ENCODE measurements at regions of chr1 and their contacts with region 1.

Region 1: DNA sequence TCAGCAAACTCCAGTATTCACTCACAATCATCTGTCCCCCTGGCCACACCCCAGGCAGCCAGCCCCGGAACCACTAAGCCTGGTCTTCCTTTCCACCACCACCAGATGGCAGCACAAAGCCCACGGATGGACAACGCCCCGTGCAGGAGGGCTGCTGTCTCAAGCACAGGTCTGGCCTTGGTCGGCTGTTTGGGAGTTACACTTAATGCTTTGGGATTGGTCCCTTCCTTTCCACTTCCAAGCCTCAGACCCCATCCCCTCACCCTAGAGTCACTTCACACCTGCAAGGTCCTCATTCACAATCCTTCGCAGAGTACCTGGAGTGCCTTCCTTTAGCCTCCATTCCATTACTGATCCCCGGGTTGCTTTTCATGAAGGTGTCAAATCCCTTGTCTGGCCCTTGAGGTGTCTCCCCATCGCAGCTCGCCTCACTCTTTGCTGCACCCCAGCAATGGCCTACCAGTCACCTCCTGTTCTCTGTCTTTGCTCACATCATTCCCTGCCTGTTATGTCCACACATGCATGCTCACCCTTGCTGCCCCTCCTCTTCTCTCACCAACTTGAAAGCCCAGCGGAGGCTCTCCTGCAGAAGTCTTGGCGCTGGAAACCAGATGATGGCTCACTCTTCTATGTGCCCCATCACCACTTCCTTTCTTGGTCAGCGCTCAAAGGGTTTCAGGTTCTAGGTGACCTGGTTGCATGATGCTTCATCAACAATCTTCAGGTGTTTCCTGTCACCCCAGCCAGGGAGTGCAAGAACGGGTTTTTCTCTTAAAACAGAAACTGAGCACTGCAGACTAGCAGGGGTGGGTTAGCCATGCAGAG is 24.9 kb upstream of the KCNA2 start:
- DNase-seq: peak; percentile 81
- H3K4me3 Mint-ChIP-seq: no peak overlapping the region
- H3K27ac Mint-ChIP-seq: no peak overlapping the region
- H3K4me1 Mint-ChIP-seq: peaks cover 58% of the 10 kb centered on the region
- H3K27me3 Mint-ChIP-seq: no peaks in the 10 kb centered on the region

Region 2: GRCh38 chr1:110455151-110455550 is 175.9 kb before region 1 on chr1:
- intact Hi-C with region 1: no loop called
- DNase-seq: no peak
- H3K4me3 Mint-ChIP-seq: no peak overlapping the region
- H3K27ac Mint-ChIP-seq: no peak overlapping the region
- H3K4me1 Mint-ChIP-seq: no peaks in the 10 kb centered on the region
- H3K27me3 Mint-ChIP-seq: peaks cover 8% of the 10 kb centered on the region

Region 3: GRCh38 chr1:110605901-110606656 is 25.0 kb before region 1 on chr1 and contains the start of gene KCNA2:
- intact Hi-C with region 1: no loop called
- DNase-seq: no peak
- H3K4me3 Mint-ChIP-seq: peak within 1 kb of the TSS; percentile 71
- H3K27ac Mint-ChIP-seq: no peak within 1 kb of the TSS
- H3K4me1 Mint-ChIP-seq: peaks cover 8% of the 10 kb centered on the region
- H3K27me3 Mint-ChIP-seq: peaks cover 55% of the 10 kb centered on the region
- total RNA-seq, gene KCNA2: 0.16 and 0.21 TPM in 2 replicates

Region 4: GRCh38 chr1:110619412-110620249 is 11.4 kb before region 1 on chr1:
- intact Hi-C with region 1: loop called (anchors 1 kb)
- DNase-seq: peak; percentile 83
- H3K4me3 Mint-ChIP-seq: peak overlapping the region; percentile 78
- H3K27ac Mint-ChIP-seq: peak overlapping the region; percentile 53
- H3K4me1 Mint-ChIP-seq: peaks cover 32% of the 10 kb centered on the region
- H3K27me3 Mint-ChIP-seq: peaks cover 18% of the 10 kb centered on the region

Region 5: DNA sequence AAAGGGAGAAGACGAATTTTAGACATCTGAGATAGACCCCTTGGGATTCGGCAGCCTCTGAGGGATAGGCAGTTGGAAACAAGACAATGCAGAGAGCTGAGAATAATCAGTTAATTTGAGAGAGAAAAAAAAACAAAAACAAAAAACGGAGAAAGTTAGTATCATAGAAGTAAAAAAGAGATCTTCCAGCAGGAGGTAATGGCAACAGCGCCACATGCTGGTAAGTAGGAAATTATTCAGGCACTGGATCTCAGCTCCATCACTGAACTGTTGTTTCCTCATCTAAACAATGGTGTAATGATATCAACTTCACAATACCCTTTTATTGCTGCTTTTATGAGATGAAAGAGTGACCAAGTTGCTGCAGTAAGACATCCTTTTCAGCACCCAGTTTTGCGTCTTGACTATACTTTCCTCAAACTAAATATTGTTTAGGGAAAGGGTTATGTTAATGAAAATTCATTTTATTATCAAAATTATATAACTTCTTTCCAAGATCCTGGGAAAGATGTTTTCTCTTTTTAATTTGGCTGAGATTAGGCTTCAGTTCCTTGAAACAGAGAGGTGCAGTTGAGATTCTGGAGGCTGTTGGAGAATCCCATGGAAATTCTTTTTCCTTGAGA is 135.1 kb after region 1 on chr1:
- intact Hi-C with region 1: loop called (anchors 1 kb)
- DNase-seq: peak; percentile 31
- H3K4me3 Mint-ChIP-seq: no peak overlapping the region
- H3K27ac Mint-ChIP-seq: no peak overlapping the region
- H3K4me1 Mint-ChIP-seq: peaks cover 6% of the 10 kb centered on the region
- H3K27me3 Mint-ChIP-seq: peaks cover 57% of the 10 kb centered on the region

Region 6: DNA sequence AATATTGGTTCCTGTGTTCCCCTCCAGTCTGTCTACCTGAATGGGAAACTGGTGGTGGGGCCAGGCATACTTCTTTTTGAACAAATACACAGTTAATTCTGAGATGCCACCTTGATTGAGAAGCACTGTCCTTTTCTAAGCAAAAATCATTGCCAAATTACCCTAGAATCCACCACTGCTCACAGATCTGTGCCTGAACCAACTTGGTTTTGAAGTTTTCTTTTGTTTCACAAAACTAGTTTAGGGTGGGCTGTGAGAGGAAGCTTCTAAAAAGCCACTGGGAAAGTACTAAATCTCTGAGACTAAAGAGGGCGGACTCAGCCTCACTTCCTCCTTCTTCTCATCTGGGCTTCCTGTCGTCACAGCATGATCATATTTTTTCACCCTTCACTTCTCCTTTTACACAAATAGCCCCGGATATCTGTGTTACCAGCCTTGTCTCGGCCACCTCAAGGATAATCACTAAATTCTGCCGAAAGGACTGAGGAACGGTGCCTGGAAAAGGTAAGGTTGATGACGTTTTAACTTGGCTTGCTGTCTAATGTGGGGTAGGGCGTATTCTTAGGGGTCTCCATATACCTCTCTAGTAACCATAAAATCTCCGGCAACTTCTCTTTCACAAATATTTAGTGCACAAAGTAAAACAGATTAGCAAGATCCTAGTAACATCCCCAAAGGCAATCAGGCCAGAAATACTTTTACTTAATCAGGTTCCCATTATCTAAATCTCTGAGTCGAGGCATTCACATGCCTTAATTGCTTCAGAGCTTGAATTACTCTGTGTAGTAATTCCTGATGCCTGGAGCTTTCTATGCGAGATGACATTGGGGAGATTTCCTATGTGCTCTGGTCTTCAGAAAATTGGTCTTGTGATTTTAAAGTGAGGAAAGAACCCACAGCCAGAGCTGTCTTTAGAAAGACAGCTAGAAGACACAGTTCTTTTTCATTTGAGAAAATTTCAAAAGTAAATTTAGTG is 242.0 kb after region 1 on chr1 and contains the start of gene CD53:
- intact Hi-C with region 1: loop called (anchors 2 kb)
- DNase-seq: peak; percentile 39
- H3K4me3 Mint-ChIP-seq: peak within 1 kb of the TSS; percentile 98
- H3K27ac Mint-ChIP-seq: peak within 1 kb of the TSS; percentile 98
- H3K4me1 Mint-ChIP-seq: peaks cover 34% of the 10 kb centered on the region
- H3K27me3 Mint-ChIP-seq: no peaks in the 10 kb centered on the region
- total RNA-seq, gene CD53: 161 and 165 TPM in 2 replicates

Region 7: GRCh38 chr1:110893908-110894490 is 262.9 kb after region 1 on chr1:
- intact Hi-C with region 1: no loop called
- DNase-seq: no peak
- H3K4me3 Mint-ChIP-seq: no peak overlapping the region
- H3K27ac Mint-ChIP-seq: peak overlapping the region; percentile 5
- H3K4me1 Mint-ChIP-seq: peaks cover 84% of the 10 kb centered on the region
- H3K27me3 Mint-ChIP-seq: no peaks in the 10 kb centered on the region

Region 8: DNA sequence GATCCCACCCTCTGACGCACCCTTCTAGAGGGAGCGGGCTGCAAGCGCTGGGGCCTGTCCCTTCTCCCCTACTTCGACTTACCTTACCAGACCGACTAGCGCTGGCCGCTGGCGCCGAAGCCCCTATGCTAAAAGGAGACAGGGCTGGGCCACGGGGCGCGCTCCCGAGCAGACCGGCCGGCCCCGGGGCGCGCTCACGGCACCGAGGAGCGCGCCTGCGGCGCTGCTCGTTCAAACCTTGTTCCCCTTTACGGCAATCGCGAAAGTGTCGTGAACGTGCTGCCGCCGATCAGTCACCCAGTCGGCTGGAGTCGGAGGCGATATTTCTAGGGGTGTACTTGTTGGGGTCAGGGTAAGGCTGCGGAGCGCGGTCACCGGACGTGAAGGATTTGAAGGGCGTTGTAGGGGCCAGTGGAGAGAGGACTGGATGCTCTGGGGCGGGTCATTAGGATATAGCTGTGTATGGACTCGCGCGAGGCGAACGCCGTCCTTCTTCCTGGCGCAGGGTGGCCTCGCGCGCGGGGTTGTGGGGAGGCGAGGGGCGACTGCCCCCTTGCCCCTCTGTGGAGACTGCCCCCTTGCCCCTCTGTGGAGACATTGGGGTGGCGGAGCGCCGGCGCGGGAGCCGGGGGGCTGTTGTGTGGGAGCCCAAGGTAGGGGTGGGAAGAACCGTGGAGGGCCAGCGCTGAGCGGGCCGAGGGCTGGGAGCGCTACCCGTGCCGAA is 509.1 kb after region 1 on chr1 and contains the starts of genes CEPT1 and DRAM2:
- intact Hi-C with region 1: loop called (anchors 10 kb)
- DNase-seq: peak; percentile 91
- H3K4me3 Mint-ChIP-seq: peak within 1 kb of the TSS; percentile 96
- H3K27ac Mint-ChIP-seq: peak within 1 kb of the TSS; percentile 92
- H3K4me1 Mint-ChIP-seq: peaks cover 36% of the 10 kb centered on the region
- H3K27me3 Mint-ChIP-seq: no peaks in the 10 kb centered on the region
- total RNA-seq, gene CEPT1: 29.8 and 34.8 TPM in 2 replicates
- total RNA-seq, gene DRAM2: 22.9 and 24.7 TPM in 2 replicates

Measured in activated T-helper 2 cell treated with anti-CD3 and anti-CD28 coated beads, Interferon-gamma antibody, Interleukin-2, Interleukin-4, amounts not matched to agents 10 μg/mL and 5 μg/mL and 100 μg/mL, durations not matched to agents 14 hours and 24 hours and 36 hours (primary cell).